Left colon (tissue), 2 donors: ENCODE measurements at regions of chr5 and their contacts with region 1.

Region 1: DNA sequence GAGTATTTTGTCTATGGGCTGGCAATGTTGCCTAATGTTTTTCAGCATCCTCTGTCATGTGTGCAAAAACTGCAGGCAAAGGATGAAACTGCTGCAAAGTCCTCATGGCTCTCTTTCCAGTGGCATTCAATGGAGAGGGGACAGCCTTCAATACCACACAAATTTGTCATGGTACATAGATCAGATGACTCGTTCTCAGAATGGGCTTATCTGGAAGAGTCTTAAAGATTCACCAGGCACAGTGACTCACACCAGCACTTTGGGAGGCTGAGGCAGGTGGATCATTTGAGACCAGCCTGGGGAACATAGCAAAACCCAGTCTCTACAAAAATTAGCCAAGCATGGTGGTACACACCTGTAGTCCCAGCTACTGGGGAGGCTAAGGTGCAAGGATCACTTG is 5.3 kb downstream of the CDKN2AIPNL start:
- DNase-seq: no peak
- ATAC-seq: no peak

Region 2: GRCh38 chr5:134296213-134296612 is 110.2 kb before region 1 on chr5:
- intact Hi-C with region 1: no loop called
- DNase-seq: no peak
- ATAC-seq: no peak

Region 3: GRCh38 chr5:134577796-134578363 is 171.5 kb after region 1 on chr5:
- intact Hi-C with region 1: loop called in 1 of 2 experiments (anchors 5 kb)
- DNase-seq: peak; percentile 52 to 89
- ATAC-seq: peak; percentile 81